Natural killer cell (primary cell): ENCODE measurements at regions of chr3 and their contacts with region 1.

Region 1: GRCh38 chr3:124559881-124560574 is 170.2 kb upstream of the UMPS start:
- DNase-seq: peak; percentile 31 to 75
- ATAC-seq: peak; percentile 65 to 85 (median 72)
- H3K4me3 ChIP-seq: no peak overlapping the region
- H3K4me3 Mint-ChIP-seq: no peak overlapping the region
- H3K27ac ChIP-seq: no peak overlapping the region
- H3K27ac Mint-ChIP-seq: no peak overlapping the region
- H3K4me1 ChIP-seq: no peaks in the 10 kb centered on the region
- H3K4me1 Mint-ChIP-seq: peaks cover 0 to 5% of the 10 kb centered on the region in 2 donors
- H3K27me3 ChIP-seq: peaks cover 10% of the 10 kb centered on the region
- H3K27me3 Mint-ChIP-seq: peaks cover 41 to 69% of the 10 kb centered on the region in 2 donors
- CTCF ChIP-seq: peak; percentile 87

Region 2: GRCh38 chr3:124351430-124352148 is 208.4 kb before region 1 on chr3:
- intact Hi-C with region 1: loop called (anchors 10 kb)
- DNase-seq: no peak
- ATAC-seq: no peak
- H3K4me3 ChIP-seq: no peak overlapping the region
- H3K4me3 Mint-ChIP-seq: no peak overlapping the region
- H3K27ac ChIP-seq: no peak overlapping the region
- H3K27ac Mint-ChIP-seq: no peak overlapping the region
- H3K4me1 ChIP-seq: no peaks in the 10 kb centered on the region
- H3K4me1 Mint-ChIP-seq: no peaks in the 10 kb centered on the region
- H3K27me3 ChIP-seq: no peaks in the 10 kb centered on the region
- H3K27me3 Mint-ChIP-seq: peaks cover 16 to 35% of the 10 kb centered on the region in 2 donors
- CTCF ChIP-seq: no peak

Region 3: GRCh38 chr3:124688581-124689454 is 128.8 kb after region 1 on chr3:
- intact Hi-C with region 1: loop called (anchors 1 kb)
- DNase-seq: peak; percentile 65 to 82
- ATAC-seq: peak; percentile 79 to 98 (median 97)
- H3K4me3 ChIP-seq: no peak overlapping the region
- H3K4me3 Mint-ChIP-seq: no peak overlapping the region
- H3K27ac ChIP-seq: no peak overlapping the region
- H3K27ac Mint-ChIP-seq: no peak overlapping the region
- H3K4me1 ChIP-seq: peaks cover 5% of the 10 kb centered on the region
- H3K4me1 Mint-ChIP-seq: peaks cover 6 to 12% of the 10 kb centered on the region in 2 donors
- H3K27me3 ChIP-seq: no peaks in the 10 kb centered on the region
- H3K27me3 Mint-ChIP-seq: peaks cover 0 to 3% of the 10 kb centered on the region in 2 donors
- CTCF ChIP-seq: peak; percentile 87

Region 4: GRCh38 chr3:124905849-124906248 is 345.8 kb after region 1 on chr3:
- intact Hi-C with region 1: loop called (anchors 10 kb)
- DNase-seq: no peak
- ATAC-seq: no peak
- H3K4me3 ChIP-seq: no peak overlapping the region
- H3K4me3 Mint-ChIP-seq: no peak overlapping the region
- H3K27ac ChIP-seq: no peak overlapping the region
- H3K27ac Mint-ChIP-seq: no peak overlapping the region
- H3K4me1 ChIP-seq: peaks cover 7% of the 10 kb centered on the region
- H3K4me1 Mint-ChIP-seq: peaks cover 0 to 7% of the 10 kb centered on the region in 2 donors
- H3K27me3 ChIP-seq: no peaks in the 10 kb centered on the region
- H3K27me3 Mint-ChIP-seq: peaks cover 12 to 20% of the 10 kb centered on the region in 2 donors
- CTCF ChIP-seq: no peak